AG04450 (cell line): ENCODE measurements at regions of chr1 and their contacts with region 1.

Region 1: DNA sequence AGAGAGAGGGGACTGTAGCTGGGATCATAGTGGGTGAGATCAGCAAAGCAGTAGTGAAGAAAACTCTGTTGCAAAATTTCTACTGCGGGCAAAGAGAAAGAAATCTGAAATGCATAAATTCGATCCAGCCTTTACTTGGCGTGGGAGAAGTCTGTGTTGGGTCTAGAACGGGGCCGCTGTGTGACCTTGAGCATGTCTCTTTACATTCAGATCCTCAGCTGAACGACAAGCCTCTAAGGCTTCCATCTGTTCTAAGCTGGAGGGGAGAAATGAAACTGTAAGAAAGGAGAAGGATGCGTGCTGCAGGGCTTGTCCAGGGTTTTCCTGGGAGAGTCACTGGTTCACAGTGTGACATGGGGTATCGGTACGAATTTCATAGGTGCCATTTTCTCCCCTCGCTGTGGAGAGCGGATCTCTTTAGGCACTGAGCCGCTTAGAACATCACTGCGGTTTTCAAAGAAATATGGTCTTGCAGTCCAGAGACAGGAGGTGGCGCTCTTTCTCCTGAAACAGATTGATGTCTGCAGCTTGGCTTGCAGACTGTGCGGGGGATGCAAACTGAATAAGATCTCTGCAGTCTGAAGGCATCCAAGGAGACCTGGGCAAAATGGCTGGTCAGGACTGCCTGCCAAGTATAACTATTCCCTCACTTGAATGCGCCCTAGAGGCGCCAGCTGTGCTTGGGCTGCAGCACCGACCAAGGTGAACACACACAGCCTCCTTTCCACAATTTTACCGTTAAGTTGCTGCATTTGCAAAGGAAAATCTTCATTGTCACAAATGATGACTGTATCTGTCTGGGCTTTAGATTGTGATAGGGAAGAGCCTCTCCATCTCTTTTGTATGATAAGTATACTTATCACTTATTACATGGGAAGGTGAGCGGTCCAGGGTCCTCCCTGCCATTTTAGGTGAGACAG is 104.1 kb downstream of the XCL2 start:
- DNase-seq: peak; percentile 73
- H3K4me3 ChIP-seq: peak overlapping the region; percentile 18
- H3K27ac ChIP-seq: no peak overlapping the region
- H3K27me3 ChIP-seq: peaks cover 3% of the 10 kb centered on the region
- CTCF ChIP-seq: peak; percentile 90

Region 2: GRCh38 chr1:168428063-168428731 is 11.5 kb before region 1 on chr1:
- CTCF ChIA-PET with region 1: interaction called, 13 read pairs
- POLR2A ChIA-PET with region 1: no interaction called
- DNase-seq: no peak
- H3K4me3 ChIP-seq: no peak overlapping the region
- H3K27ac ChIP-seq: no peak overlapping the region
- H3K27me3 ChIP-seq: no peaks in the 10 kb centered on the region
- CTCF ChIP-seq: no peak

Region 3: GRCh38 chr1:168582693-168583336 is 143.1 kb after region 1 on chr1:
- CTCF ChIA-PET with region 1: interaction called, 10 read pairs
- POLR2A ChIA-PET with region 1: no interaction called
- DNase-seq: no peak
- H3K4me3 ChIP-seq: no peak overlapping the region
- H3K27ac ChIP-seq: no peak overlapping the region
- H3K27me3 ChIP-seq: no peaks in the 10 kb centered on the region
- CTCF ChIP-seq: no peak